Activated CD8-positive, alpha-beta T cell treated with anti-CD3 and anti-CD28 coated beads, Interleukin-2, amount 10 ng/mL, durations not matched to agents 7 days and 5 days (primary cell): ENCODE measurements at regions of chr2 and their contacts with region 1.

Region 1: DNA sequence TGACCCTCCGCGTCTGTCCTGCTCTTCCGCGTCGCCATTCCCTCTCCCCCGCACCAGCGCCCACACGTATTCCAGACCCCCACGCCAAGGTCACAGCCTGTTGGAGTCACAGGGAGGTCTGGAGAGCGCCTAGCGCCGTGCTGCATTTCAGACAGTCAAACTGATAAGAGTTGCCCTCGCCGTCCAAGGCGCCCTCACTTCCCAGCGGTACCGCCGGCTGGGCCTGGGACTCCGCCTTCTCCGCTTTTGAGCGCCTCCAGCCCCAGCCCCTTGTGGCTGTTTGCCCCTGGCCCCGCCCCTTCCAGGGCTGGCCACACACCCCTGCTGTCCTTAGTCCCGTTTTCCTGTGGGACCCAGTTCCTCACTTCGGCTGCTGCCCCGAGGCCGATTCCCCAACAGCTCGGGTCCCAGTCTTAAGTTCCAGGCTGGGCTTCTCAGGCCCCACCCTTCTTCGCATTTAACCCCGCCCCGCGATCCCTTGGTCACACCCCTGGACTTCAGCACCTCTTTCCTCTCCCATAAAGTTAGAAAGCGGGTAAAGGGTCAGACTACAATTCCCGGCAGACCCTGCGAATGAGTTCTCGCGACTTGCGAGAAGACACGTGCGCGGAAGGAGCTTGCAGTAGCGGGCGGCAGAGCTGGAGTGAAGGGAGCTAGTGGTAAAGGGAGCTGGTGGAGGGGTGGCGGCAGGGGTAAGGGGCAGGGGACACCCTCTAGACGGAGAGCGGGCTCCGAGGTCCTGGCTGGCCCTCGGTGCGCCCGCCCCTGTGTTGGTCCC is at the start of gene GMPPA:
- DNase-seq: peak; percentile 97
- ATAC-seq: peak; percentile 96
- H3K4me3 Mint-ChIP-seq: peak within 1 kb of the TSS; percentile 83
- H3K27ac Mint-ChIP-seq: peak within 1 kb of the TSS; percentile 73
- H3K4me1 Mint-ChIP-seq: peaks cover 43% of the 10 kb centered on the region
- H3K27me3 Mint-ChIP-seq: peaks cover 42% of the 10 kb centered on the region
- total RNA-seq, gene GMPPA: 37.8 to 41.2 TPM

Region 2: DNA sequence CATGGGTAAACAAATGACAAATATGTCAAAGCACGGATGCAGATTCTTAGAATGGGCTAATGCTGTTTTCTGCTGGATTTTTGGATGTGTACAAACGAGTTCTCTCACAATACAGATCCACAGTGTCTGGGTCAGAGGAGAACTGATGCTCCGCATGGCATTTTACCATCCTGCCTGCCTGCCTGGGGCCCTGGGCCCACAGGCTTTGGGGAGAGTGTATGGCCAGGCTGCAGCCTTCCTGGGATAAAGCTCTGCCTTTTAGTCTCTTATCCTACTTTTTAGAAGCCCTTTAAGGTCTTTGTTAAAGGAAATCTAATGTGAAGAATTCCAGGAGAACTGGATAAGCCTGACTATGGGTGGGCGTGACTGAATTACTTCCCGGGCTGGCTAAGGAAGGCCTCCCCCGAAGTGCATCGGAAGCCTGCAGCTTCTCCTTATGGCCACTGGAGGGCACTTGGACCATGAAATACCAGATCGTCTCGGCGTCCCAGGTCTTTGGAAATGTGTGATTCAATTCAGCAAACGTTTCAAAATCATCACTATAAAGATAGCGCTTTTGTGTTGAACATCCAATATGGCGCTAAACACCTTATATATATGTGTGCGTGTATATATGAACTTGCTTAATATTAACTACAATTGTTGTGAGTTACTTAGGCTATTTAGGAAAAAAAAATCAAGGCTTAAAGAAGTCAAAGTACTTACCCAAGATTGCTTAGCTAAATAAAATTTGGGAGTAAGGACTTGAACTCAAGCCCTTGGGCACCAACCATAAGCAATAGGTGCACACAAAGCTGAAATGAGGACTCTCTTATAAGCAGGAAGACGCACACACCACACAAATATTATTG is 95.6 kb before region 1 on chr2:
- CTCF ChIA-PET with region 1: interaction called, 12 read pairs
- POLR2A ChIA-PET with region 1: no interaction called
- DNase-seq: peak; percentile 76
- ATAC-seq: peak; percentile 90
- H3K4me3 Mint-ChIP-seq: no peak overlapping the region
- H3K27ac Mint-ChIP-seq: no peak overlapping the region
- H3K4me1 Mint-ChIP-seq: no peaks in the 10 kb centered on the region
- H3K27me3 Mint-ChIP-seq: peaks cover 4% of the 10 kb centered on the region

Region 3: GRCh38 chr2:219453681-219454590 is 44.5 kb before region 1 on chr2:
- CTCF ChIA-PET with region 1: interaction called, 13 read pairs
- POLR2A ChIA-PET with region 1: interaction called, 3 read pairs
- DNase-seq: no peak
- ATAC-seq: no peak
- H3K4me3 Mint-ChIP-seq: no peak overlapping the region
- H3K27ac Mint-ChIP-seq: no peak overlapping the region
- H3K4me1 Mint-ChIP-seq: peaks cover 77% of the 10 kb centered on the region
- H3K27me3 Mint-ChIP-seq: peaks cover 18% of the 10 kb centered on the region

Region 4: GRCh38 chr2:219459460-219460311 is 38.8 kb before region 1 on chr2:
- CTCF ChIA-PET with region 1: interaction called, 13 read pairs
- POLR2A ChIA-PET with region 1: interaction called, 3 read pairs
- DNase-seq: peak; percentile 53
- ATAC-seq: peak; percentile 27
- H3K4me3 Mint-ChIP-seq: no peak overlapping the region
- H3K27ac Mint-ChIP-seq: peak overlapping the region; percentile 52
- H3K4me1 Mint-ChIP-seq: peaks cover 54% of the 10 kb centered on the region
- H3K27me3 Mint-ChIP-seq: no peaks in the 10 kb centered on the region

Region 5: GRCh38 chr2:219484343-219485200 is 13.9 kb before region 1 on chr2:
- CTCF ChIA-PET with region 1: interaction called, 22 read pairs
- POLR2A ChIA-PET with region 1: interaction called, 4 read pairs
- DNase-seq: no peak
- ATAC-seq: peak; percentile 34
- H3K4me3 Mint-ChIP-seq: no peak overlapping the region
- H3K27ac Mint-ChIP-seq: no peak overlapping the region
- H3K4me1 Mint-ChIP-seq: peaks cover 2% of the 10 kb centered on the region
- H3K27me3 Mint-ChIP-seq: peaks cover 41% of the 10 kb centered on the region

Region 6: DNA sequence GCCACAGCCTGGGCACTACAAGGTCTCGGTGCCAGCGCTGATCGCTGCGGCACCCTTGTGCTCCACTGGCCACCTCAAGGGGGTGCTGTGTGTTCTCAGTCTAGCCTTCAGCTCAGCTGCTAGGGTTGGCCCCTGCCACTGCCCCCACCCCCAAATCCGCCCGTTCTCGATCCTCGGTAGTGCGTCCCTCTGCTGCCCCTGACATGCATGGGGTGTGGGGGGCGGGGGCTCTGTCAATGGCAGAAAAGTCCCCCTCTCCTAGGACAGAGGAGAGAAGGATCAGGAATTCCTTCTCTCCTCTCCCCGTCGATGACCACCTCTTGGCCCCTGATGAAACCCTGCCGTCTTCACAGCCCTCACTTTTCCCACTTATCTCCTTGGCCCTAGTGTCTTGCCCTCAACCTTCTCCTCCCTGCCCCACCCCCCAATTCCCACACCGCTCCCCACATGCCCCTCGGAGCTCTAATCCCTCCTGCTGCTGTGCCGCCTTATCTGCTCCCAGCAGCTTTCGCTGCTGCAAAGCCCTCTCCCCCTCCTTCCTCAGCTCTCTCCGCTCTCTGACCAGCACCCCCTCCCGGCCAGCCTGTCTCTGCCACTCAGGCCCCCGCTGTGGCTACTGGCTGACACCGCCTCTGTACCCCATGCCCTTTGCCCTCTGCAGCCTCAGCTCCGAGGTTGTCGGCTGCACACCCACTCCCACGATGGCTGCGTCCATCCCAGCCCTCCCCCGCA is 11.5 kb after region 1 on chr2:
- CTCF ChIA-PET with region 1: interaction called, 34 read pairs
- POLR2A ChIA-PET with region 1: interaction called, 6 read pairs
- DNase-seq: peak; percentile 59
- ATAC-seq: peak; percentile 75
- H3K4me3 Mint-ChIP-seq: no peak overlapping the region
- H3K27ac Mint-ChIP-seq: no peak overlapping the region
- H3K4me1 Mint-ChIP-seq: peaks cover 15% of the 10 kb centered on the region
- H3K27me3 Mint-ChIP-seq: peaks cover 48% of the 10 kb centered on the region

Region 7: GRCh38 chr2:219543601-219544358 is 45.3 kb after region 1 on chr2 and contains the starts of genes CHPF and TMEM198:
- CTCF ChIA-PET with region 1: interaction called, 19 read pairs
- POLR2A ChIA-PET with region 1: no interaction called
- DNase-seq: peak; percentile 95
- ATAC-seq: peak; percentile 71
- H3K4me3 Mint-ChIP-seq: peak within 1 kb of the TSS; percentile 73
- H3K27ac Mint-ChIP-seq: peak within 1 kb of the TSS; percentile 78
- H3K4me1 Mint-ChIP-seq: peaks cover 25% of the 10 kb centered on the region
- H3K27me3 Mint-ChIP-seq: peaks cover 24% of the 10 kb centered on the region
- total RNA-seq, gene CHPF: 7.1 to 7.3 TPM
- total RNA-seq, gene TMEM198: 0.47 to 0.60 TPM